Adrenal gland (tissue), 19 donors: ENCODE measurements at regions of chr1 and their contacts with region 1.

Region 1: GRCh38 chr1:204565617-204566582 is 49.7 kb downstream of the MDM4 start:
- DNase-seq: peak; percentile 40 to 84 (median 56)
- H3K4me3 ChIP-seq: no peak overlapping the region
- H3K27ac ChIP-seq: no peak overlapping the region
- H3K4me1 ChIP-seq: no peaks in the 10 kb centered on the region
- H3K27me3 ChIP-seq: no peaks in the 10 kb centered on the region
- CTCF ChIP-seq: peak; percentile 56 to 80 (median 68)
- POLR2A ChIP-seq: no peak

Region 2: GRCh38 chr1:204633665-204634064 is 67.8 kb after region 1 on chr1:
- intact Hi-C with region 1: no loop called
- DNase-seq: peak in 1 of 7 donors; percentile 6
- H3K4me3 ChIP-seq: no peak overlapping the region
- H3K27ac ChIP-seq: no peak overlapping the region
- H3K4me1 ChIP-seq: no peaks in the 10 kb centered on the region
- H3K27me3 ChIP-seq: peaks cover 4% of the 10 kb centered on the region
- CTCF ChIP-seq: no peak
- POLR2A ChIP-seq: no peak

Region 3: GRCh38 chr1:204763706-204764427 is 198.0 kb after region 1 on chr1:
- intact Hi-C with region 1: loop called (anchors 5 kb)
- DNase-seq: peak; percentile 87 to 95 (median 94)
- H3K4me3 ChIP-seq: no peak overlapping the region
- H3K27ac ChIP-seq: peak overlapping the region in 1 of 5 donors; percentile 0
- H3K4me1 ChIP-seq: peaks cover 4 to 13% of the 10 kb centered on the region in 2 donors
- H3K27me3 ChIP-seq: no peaks in the 10 kb centered on the region
- CTCF ChIP-seq: peak; percentile 76 to 92 (median 85)
- POLR2A ChIP-seq: no peak